Naive thymus-derived CD4-positive, alpha-beta T cell (primary cell): ENCODE measurements at regions of chr7 and their contacts with region 1.

Region 1: DNA sequence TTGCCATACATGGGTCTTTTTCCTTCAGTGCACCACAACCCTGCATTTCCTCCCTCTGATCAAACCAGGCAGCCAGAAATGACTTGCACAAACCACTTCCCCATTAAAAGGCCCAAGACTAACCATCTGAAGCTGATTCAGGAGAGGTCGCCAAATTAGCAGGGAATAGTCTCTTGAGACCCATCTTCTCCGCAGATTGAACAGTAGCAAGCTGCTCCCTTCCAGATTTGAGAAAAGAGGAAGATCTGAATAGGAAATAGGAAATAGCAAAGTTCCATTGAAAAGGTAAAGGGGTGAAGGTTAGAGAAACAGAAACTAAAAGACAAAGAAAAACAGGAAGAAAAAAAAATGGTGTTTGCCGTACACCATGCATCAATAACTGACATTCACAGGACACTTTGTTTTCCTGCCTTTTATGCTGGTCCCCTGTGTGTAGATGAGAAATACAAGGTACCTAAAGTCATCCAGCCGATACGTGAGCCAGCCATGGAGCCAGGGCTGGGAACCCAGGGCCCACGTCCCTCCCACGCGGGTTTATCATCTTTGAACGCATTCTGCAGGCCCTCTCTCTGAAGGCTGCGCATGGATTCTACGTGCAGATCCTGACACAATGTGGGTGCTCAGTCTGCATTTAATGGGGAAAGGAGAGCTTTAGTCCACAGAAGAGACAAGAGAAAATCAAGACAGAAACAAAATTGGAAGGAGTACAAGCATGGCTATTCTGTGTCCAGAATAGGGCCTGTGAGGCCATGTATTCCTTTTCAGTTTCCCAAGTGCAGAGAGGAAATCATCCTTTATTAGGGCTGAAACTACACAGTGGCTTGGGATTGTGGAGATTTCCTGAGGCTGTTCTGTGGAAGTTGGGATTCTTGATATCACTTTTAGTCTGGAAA is 268.4 kb upstream of the NPVF start:
- DNase-seq: peak in 6 of 9 donors; percentile 9 to 40 (median 35)
- ATAC-seq: peak; percentile 80
- H3K4me3 ChIP-seq: peak overlapping the region; percentile 24
- H3K4me3 Mint-ChIP-seq: peak overlapping the region; percentile 53 to 92 (median 84)
- H3K27ac ChIP-seq: peak overlapping the region; percentile 60
- H3K27ac Mint-ChIP-seq: peak overlapping the region; percentile 83 to 97 (median 92)
- H3K4me1 ChIP-seq: peaks cover 0 to 15% of the 10 kb centered on the region in 2 donors
- H3K4me1 Mint-ChIP-seq: peaks cover 7 to 23% (median 18%) of the 10 kb centered on the region in 7 donors
- H3K27me3 ChIP-seq: no peaks in the 10 kb centered on the region
- H3K27me3 Mint-ChIP-seq: peaks cover 0 to 3% (median 0%) of the 10 kb centered on the region in 5 donors

Region 2: GRCh38 chr7:25520017-25520416 is 23.3 kb after region 1 on chr7:
- CTCF ChIA-PET with region 1: interaction called, 3 read pairs
- POLR2A ChIA-PET with region 1: interaction called, 10 read pairs
- intact Hi-C with region 1: loop called in 1 of 2 experiments (anchors 2 kb)
- DNase-seq: peak in 7 of 9 donors; percentile 13 to 55 (median 46)
- ATAC-seq: peak; percentile 42
- H3K4me3 ChIP-seq: peak overlapping the region; percentile 17
- H3K4me3 Mint-ChIP-seq: peak overlapping the region; percentile 44 to 73 (median 64)
- H3K27ac ChIP-seq: no peak overlapping the region
- H3K27ac Mint-ChIP-seq: peak overlapping the region; percentile 47 to 91 (median 82)
- H3K4me1 ChIP-seq: peaks cover 0 to 45% of the 10 kb centered on the region in 2 donors
- H3K4me1 Mint-ChIP-seq: peaks cover 9 to 73% (median 61%) of the 10 kb centered on the region in 7 donors
- H3K27me3 ChIP-seq: no peaks in the 10 kb centered on the region
- H3K27me3 Mint-ChIP-seq: peaks cover 0 to 3% (median 0%) of the 10 kb centered on the region in 5 donors

Region 3: DNA sequence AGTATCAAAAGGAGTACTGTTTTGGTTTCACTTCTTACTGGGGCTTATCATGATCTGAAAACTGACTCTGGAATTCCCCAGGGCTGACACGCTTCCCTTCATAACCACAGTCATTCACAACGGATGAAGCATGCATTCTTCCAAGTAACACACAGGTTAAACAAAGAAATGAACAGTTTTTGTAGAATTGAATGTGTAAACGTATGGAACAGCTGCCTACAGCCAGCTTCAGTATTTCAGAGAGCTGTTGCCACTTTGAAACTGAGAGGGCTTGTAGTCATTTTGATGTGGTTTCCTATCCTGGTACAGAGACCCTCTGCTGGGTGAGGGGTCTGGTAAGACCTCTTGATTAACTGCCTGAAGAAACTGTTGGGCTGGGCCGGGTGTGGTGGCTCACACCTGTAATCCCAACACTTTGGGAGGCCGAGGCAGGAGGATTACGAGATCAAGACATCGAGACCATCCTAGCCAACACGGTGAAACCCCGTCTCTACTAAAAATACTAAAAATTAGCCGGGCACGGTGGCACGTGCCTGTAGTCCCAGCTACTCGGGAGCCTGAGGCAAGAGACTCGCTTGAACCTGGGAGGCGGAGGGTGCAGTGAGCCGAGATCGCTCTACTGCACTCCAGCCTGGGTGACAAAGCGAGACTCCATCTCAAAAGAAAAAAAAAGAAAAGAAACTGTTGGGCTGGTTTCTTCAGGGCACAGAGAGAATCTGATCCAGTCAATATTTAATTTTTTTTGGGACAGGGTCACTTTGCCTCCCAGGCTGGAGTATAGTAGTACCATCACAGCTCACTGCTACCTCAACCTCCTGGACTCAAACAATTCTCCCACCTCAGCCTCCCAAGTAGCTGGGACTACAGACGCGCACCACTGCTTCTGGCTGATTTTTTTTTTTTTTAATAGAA is 660.0 kb after region 1 on chr7:
- CTCF ChIA-PET with region 1: no interaction called
- POLR2A ChIA-PET with region 1: no interaction called
- intact Hi-C with region 1: no loop called
- DNase-seq: peak in 8 of 9 donors; percentile 23 to 80 (median 51)
- ATAC-seq: peak; percentile 76
- H3K4me3 ChIP-seq: peak overlapping the region; percentile 6
- H3K4me3 Mint-ChIP-seq: peak overlapping the region; percentile 37 to 100 (median 66)
- H3K27ac ChIP-seq: peak overlapping the region; percentile 63
- H3K27ac Mint-ChIP-seq: peak overlapping the region; percentile 60 to 97 (median 80)
- H3K4me1 ChIP-seq: peaks cover 33 to 34% of the 10 kb centered on the region in 2 donors
- H3K4me1 Mint-ChIP-seq: peaks cover 19 to 79% (median 68%) of the 10 kb centered on the region in 7 donors
- H3K27me3 ChIP-seq: no peaks in the 10 kb centered on the region
- H3K27me3 Mint-ChIP-seq: no peaks in the 10 kb centered on the region

Region 4: DNA sequence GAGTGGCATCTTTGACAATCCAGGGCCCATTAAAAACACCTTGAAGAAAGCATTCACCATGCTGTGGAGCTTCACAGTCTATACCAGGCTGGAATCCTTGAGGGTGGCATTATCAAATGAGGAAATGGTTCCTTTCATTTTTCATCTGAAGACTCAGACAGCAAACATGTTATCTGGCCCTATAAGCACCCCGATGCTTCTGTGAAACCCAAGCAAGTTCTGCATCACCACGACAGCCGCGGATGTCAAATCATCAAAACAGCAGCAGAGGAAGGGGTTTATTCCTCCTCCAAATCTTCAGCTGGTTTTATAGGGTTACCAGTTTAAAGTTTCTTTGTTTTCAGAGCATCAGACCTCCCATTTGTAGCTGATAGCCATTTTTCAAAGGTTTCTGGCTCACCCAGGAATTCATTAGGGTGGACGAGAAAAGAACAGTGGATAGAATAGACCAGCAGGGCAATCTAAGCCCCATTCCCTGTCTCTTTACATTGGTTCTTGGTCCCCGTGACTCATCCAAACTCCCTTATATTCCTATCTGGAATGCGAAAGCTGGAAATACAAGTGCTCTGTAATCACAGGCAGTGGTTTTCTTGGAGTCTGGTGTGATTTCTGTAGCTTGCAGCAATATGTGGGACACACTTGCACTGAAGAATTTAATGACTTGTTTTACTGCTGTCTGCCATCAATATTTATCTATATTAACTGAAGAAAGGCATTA is 1149.8 kb after region 1 on chr7:
- CTCF ChIA-PET with region 1: no interaction called
- POLR2A ChIA-PET with region 1: no interaction called
- intact Hi-C with region 1: no loop called
- DNase-seq: no peak
- ATAC-seq: no peak
- H3K4me3 ChIP-seq: no peak overlapping the region
- H3K4me3 Mint-ChIP-seq: no peak overlapping the region
- H3K27ac ChIP-seq: no peak overlapping the region
- H3K27ac Mint-ChIP-seq: no peak overlapping the region
- H3K4me1 ChIP-seq: no peaks in the 10 kb centered on the region
- H3K4me1 Mint-ChIP-seq: peaks cover 0 to 2% (median 0%) of the 10 kb centered on the region in 7 donors
- H3K27me3 ChIP-seq: no peaks in the 10 kb centered on the region
- H3K27me3 Mint-ChIP-seq: peaks cover 0 to 29% (median 11%) of the 10 kb centered on the region in 5 donors